Activated CD4-positive, alpha-beta T cell treated with anti-CD3 and anti-CD28 coated beads, Interleukin-2, amount 10 ng/mL, durations not matched to agents 24 days and 14 days (primary cell): ENCODE measurements at regions of chr4 and their contacts with region 1.

Region 1: DNA sequence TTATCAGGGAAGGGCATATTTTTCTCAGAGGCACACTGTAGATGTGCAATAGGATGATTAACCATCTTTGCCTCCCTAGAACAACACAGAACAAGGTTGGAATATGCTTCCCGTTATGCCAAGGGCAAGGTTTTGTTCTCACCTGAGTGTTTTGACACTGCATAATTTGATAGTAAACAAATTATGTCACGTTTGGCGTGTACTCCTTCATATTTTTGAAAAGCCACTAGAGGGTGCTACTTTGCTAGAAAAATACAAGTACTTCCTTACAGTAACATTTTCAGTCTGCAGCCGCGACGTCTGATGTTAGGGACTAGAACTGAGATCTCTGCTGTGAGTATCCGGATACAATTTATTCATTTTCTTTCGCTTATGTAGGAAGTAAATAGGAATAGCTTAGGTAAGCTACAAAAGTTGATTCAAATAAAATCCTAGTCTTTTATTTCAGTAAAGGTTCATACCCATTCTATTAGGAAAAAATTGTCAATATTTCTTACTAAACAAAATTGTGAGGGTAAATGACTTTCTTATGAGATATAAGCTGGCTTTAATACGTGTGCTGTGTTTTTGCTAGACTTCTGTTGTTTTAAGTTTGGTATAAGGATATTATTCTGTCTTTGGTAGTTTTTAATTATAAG is 181.1 kb upstream of the WDFY3 start:
- DNase-seq: peak; percentile 64
- H3K4me3 Mint-ChIP-seq: no peak overlapping the region
- H3K27ac Mint-ChIP-seq: no peak overlapping the region
- H3K4me1 Mint-ChIP-seq: no peaks in the 10 kb centered on the region
- H3K27me3 Mint-ChIP-seq: peaks cover 4% of the 10 kb centered on the region

Region 2: GRCh38 chr4:85370430-85371032 is 223.0 kb after region 1 on chr4:
- intact Hi-C with region 1: loop called (anchors 2 kb)
- DNase-seq: peak; percentile 57
- H3K4me3 Mint-ChIP-seq: no peak overlapping the region
- H3K27ac Mint-ChIP-seq: no peak overlapping the region
- H3K4me1 Mint-ChIP-seq: no peaks in the 10 kb centered on the region
- H3K27me3 Mint-ChIP-seq: no peaks in the 10 kb centered on the region

Region 3: GRCh38 chr4:85474818-85475630 is 327.5 kb after region 1 on chr4 and contains the start of gene ARHGAP24:
- intact Hi-C with region 1: no loop called
- DNase-seq: peak; percentile 56
- H3K4me3 Mint-ChIP-seq: peak within 1 kb of the TSS; percentile 51
- H3K27ac Mint-ChIP-seq: no peak within 1 kb of the TSS
- H3K4me1 Mint-ChIP-seq: no peaks in the 10 kb centered on the region
- H3K27me3 Mint-ChIP-seq: peaks cover 25% of the 10 kb centered on the region
- total RNA-seq, gene ARHGAP24: not detected in 2 replicates

Region 4: GRCh38 chr4:85747882-85748491 is 600.4 kb after region 1 on chr4:
- intact Hi-C with region 1: loop called (anchors 1 kb)
- DNase-seq: peak; percentile 61
- H3K4me3 Mint-ChIP-seq: no peak overlapping the region
- H3K27ac Mint-ChIP-seq: no peak overlapping the region
- H3K4me1 Mint-ChIP-seq: no peaks in the 10 kb centered on the region
- H3K27me3 Mint-ChIP-seq: no peaks in the 10 kb centered on the region

Region 5: GRCh38 chr4:85798012-85798770 is 650.6 kb after region 1 on chr4:
- intact Hi-C with region 1: loop called (anchors 5 kb)
- DNase-seq: no peak
- H3K4me3 Mint-ChIP-seq: no peak overlapping the region
- H3K27ac Mint-ChIP-seq: no peak overlapping the region
- H3K4me1 Mint-ChIP-seq: no peaks in the 10 kb centered on the region
- H3K27me3 Mint-ChIP-seq: no peaks in the 10 kb centered on the region